SK-N-SH (cell line): ENCODE measurements at regions of chr7 and their contacts with region 1.

Region 1: GRCh38 chr7:100726996-100727761 is 6.2 kb upstream of the ZAN start:
- DNase-seq: no peak
- H3K4me3 ChIP-seq: no peak overlapping the region
- H3K27ac ChIP-seq: no peak overlapping the region
- H3K4me1 ChIP-seq: no peaks in the 10 kb centered on the region; a peak in 1 of 4 replicates
- H3K27me3 ChIP-seq: peaks cover 4% of the 10 kb centered on the region; the same call in 1 of the 2 replicates
- CTCF ChIP-seq: no peak
- EP300 ChIP-seq: no peak
- RAD21 ChIP-seq: no peak

Region 2: DNA sequence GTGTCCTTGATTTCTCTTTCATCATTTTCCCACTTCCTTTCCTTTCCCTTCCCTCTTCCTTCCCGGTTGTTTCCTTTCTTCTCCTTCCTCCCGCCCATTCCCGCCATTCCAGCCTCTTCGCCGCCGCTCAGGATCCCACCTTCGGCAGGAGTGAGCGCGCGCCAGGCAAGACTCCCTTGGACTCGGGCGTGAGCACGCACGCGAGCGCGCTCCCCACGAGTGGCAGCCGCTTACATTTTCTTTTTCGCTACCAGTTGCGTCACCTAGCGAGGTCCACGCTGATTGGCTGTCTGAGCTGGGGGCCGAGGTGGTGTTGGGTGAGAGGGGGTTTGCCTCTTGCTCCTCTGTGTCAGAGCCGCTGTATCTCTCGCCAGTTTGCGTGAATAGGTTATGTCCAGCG is 18.0 kb after region 1 on chr7:
- CTCF ChIA-PET with region 1: interaction called, 55 read pairs
- POLR2A ChIA-PET with region 1: no interaction called
- DNase-seq: peak; percentile 82
- H3K4me3 ChIP-seq: peak overlapping the region; percentile 34 to 50; a peak in 3 of 4 replicates
- H3K27ac ChIP-seq: no peak overlapping the region
- H3K4me1 ChIP-seq: no peaks in the 10 kb centered on the region
- H3K27me3 ChIP-seq: peaks cover 22% of the 10 kb centered on the region
- CTCF ChIP-seq: no peak
- EP300 ChIP-seq: no peak
- RAD21 ChIP-seq: no peak